ENCODE measurements at regions of chr12 and their contacts with region 1.

Region 1: GRCh38 chr12:49232940-49233841 is 31.7 kb upstream of the TUBA1C start:
- DNase-seq: no peak
- H3K4me3 ChIP-seq: no peak overlapping the region
- H3K27ac ChIP-seq: no peak overlapping the region
- H3K4me1 ChIP-seq: 0 out of 2 replicates have a peak, but pooled peaks cover 3% of the 10 kb centered on the region
- H3K27me3 ChIP-seq: no peaks in the 10 kb centered on the region
- CTCF ChIP-seq: no peak

Region 2: GRCh38 chr12:49188914-49189367 is 44.2 kb before region 1 on chr12 and contains the start of gene TUBA1A:
- CTCF ChIA-PET with region 1: interaction called, 7 read pairs
- POLR2A ChIA-PET with region 1: no interaction called
- intact Hi-C with region 1: loop called (anchors 5 kb)
- DNase-seq: peak; percentile 66 to 71
- H3K4me3 ChIP-seq: peak within 1 kb of the TSS; percentile 94
- H3K27ac ChIP-seq: no peak within 1 kb of the TSS
- H3K4me1 ChIP-seq: no peaks in the 10 kb centered on the region; the same call in 1 of the 2 replicates
- H3K27me3 ChIP-seq: peaks cover 6% of the 10 kb centered on the region; the same call in 1 of the 2 replicates
- CTCF ChIP-seq: no peak
- total RNA-seq, gene TUBA1A: 14.1 and 14.2 TPM in 2 replicates

Region 3: GRCh38 chr12:49331380-49332222 is 98.4 kb after region 1 on chr12:
- CTCF ChIA-PET with region 1: interaction called, 16 read pairs
- POLR2A ChIA-PET with region 1: no interaction called
- intact Hi-C with region 1: no loop called
- DNase-seq: peak in 1 of 2 experiments; percentile 47
- H3K4me3 ChIP-seq: no peak overlapping the region
- H3K27ac ChIP-seq: no peak overlapping the region
- H3K4me1 ChIP-seq: no peaks in the 10 kb centered on the region
- H3K27me3 ChIP-seq: no peaks in the 10 kb centered on the region
- CTCF ChIP-seq: peak; percentile 76

Region 4: DNA sequence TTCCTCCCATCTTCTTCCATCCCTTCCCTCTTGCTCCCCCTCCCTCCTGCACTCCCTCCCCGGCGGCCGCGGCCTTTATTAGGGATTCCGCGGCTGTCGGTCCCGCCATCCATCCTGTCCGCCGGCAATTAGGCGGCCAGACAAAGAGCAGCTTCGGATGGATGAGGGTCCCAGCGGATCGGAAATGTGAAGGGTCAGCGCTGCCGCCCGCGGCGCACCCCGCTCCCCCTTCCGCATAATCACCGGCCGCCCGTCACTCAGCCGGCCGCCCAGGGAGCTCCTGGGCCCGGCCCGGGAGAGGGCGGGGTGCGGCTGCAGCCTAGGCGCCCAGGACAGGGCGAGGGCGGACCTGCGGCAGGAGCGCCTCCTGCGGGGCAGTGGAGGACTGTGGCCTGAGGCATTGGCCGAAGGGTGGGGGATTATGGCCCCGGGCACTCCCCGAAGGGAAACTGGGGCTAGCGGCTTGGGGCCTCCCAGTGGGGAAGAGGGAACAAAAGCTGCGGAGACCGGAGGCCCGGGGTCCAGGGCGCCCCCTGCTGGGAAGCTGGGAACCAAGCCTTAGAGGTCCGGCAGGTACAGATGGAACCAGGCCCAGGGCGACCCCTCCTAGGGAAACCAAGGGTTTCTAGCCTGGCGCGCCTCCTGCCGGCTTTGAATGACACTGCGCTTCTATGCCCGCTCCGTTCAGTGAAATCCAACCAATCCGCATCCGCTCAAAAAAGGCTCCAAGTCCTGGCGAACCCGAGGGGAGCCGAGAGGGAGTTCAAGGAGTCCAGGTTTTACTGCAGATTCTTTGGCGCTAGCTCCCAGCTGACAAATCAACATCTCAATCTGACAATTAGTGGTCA is 109.1 kb after region 1 on chr12:
- CTCF ChIA-PET with region 1: no interaction called
- POLR2A ChIA-PET with region 1: no interaction called
- intact Hi-C with region 1: no loop called
- DNase-seq: peak in 1 of 2 experiments; percentile 74
- H3K4me3 ChIP-seq: no peak overlapping the region
- H3K27ac ChIP-seq: no peak overlapping the region
- H3K4me1 ChIP-seq: peaks cover 19% of the 10 kb centered on the region
- H3K27me3 ChIP-seq: peaks cover 44% of the 10 kb centered on the region
- CTCF ChIP-seq: peak; percentile 71

Region 5: DNA sequence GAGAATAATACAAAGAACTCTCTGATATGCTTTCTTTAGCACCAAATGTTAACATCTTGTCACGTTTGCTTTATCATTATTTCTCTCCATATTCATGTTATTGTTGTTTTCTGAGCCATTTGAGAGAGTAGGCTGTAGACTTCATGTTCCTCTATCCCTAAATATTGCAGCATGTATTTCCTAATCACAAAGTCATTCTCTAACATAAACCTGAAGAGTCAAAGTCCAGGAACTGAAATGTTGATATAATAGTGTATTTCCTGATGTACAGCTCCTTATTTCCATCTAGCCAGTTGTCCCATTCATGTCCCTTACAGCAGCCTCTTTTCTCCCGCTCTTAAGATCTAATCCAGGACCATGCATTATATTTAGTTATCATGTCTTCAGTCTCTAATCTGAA is 206.8 kb after region 1 on chr12:
- CTCF ChIA-PET with region 1: no interaction called
- POLR2A ChIA-PET with region 1: no interaction called
- intact Hi-C with region 1: no loop called
- DNase-seq: no peak
- H3K4me3 ChIP-seq: no peak overlapping the region
- H3K27ac ChIP-seq: no peak overlapping the region
- H3K4me1 ChIP-seq: no peaks in the 10 kb centered on the region
- H3K27me3 ChIP-seq: no peaks in the 10 kb centered on the region
- CTCF ChIP-seq: no peak

Measured in PC-9 (cell line).